CD8-positive, alpha-beta T cell (primary cell): ENCODE measurements at regions of chr21 and their contacts with region 1.

Region 1: GRCh38 chr21:21406921-21407320 is 408.7 kb downstream of the NCAM2 start:
- DNase-seq: no peak
- ATAC-seq: no peak
- H3K4me3 ChIP-seq: no peak overlapping the region
- H3K4me3 Mint-ChIP-seq: no peak overlapping the region
- H3K27ac ChIP-seq: no peak overlapping the region
- H3K27ac Mint-ChIP-seq: no peak overlapping the region
- H3K4me1 ChIP-seq: no peaks in the 10 kb centered on the region
- H3K4me1 Mint-ChIP-seq: no peaks in the 10 kb centered on the region
- H3K27me3 ChIP-seq: no peaks in the 10 kb centered on the region
- H3K27me3 Mint-ChIP-seq: no peaks in the 10 kb centered on the region
- CTCF ChIP-seq: no peak

Region 2: DNA sequence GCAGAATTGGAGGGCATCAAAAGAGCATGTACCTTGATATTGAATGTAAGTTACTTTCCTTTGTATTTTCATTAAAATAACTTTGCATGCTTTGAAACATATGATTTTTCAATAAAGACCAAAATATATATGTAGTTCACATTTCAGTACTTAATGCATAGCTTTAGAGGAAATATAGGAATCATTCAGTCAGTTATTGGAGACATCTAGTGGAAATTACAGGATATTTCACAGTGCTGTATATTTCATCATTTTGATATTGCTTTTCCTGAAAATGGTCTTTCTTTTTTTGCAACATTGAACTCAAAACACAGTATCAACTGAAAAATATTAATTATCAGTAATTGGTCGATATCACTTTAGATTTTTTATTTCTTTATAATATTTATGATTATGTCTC is 33.0 kb before region 1 on chr21:
- CTCF ChIA-PET with region 1: no interaction called
- POLR2A ChIA-PET with region 1: no interaction called
- intact Hi-C with region 1: loop called in 1 of 2 experiments (anchors 1 kb)
- DNase-seq: no peak
- ATAC-seq: no peak
- H3K4me3 ChIP-seq: no peak overlapping the region
- H3K4me3 Mint-ChIP-seq: no peak overlapping the region
- H3K27ac ChIP-seq: no peak overlapping the region
- H3K27ac Mint-ChIP-seq: no peak overlapping the region
- H3K4me1 ChIP-seq: no peaks in the 10 kb centered on the region
- H3K4me1 Mint-ChIP-seq: no peaks in the 10 kb centered on the region
- H3K27me3 ChIP-seq: no peaks in the 10 kb centered on the region
- H3K27me3 Mint-ChIP-seq: no peaks in the 10 kb centered on the region
- CTCF ChIP-seq: no peak